Mammary epithelial cell (primary cell): ENCODE measurements at regions of chr7 and their contacts with region 1.

Region 1: DNA sequence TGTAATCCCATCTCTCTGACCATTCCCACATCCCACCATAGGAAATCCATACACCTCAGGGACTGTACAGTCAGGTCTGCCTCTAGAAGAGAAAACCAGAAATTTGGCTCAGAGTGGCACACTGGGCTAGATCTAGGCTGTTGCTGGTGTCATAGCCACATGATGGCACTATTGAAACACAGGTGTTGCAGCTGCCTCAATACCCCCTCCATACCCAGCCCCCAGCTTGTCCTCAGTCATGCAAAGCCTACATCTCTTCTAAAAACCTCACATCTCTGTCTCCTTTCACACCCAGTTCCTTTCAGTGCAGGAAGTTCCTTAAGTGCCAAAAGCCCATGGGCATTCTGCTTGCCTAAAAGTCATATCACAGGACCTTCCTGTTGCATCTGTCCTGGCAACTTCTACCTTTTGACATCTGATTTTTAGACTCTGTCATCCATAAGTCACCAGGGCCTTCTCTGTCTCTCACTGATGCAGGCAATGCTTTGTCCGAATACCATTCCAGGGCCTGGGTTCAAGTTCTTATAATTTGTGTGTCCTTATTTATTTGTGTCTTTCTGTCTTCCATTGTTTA is 27.0 kb upstream of the HIBADH start:
- DNase-seq: peak; percentile 32
- H3K4me3 ChIP-seq: no peak overlapping the region
- H3K27ac ChIP-seq: no peak overlapping the region
- H3K4me1 ChIP-seq: peaks cover 6% of the 10 kb centered on the region
- H3K27me3 ChIP-seq: no peaks in the 10 kb centered on the region
- CTCF ChIP-seq: peak; percentile 40 to 60

Region 2: GRCh38 chr7:26307226-26307625 is 1382.5 kb before region 1 on chr7:
- CTCF ChIA-PET with region 1: no interaction called
- dilution Hi-C with region 1: no loop called
- in situ Hi-C with region 1: no loop called
- intact Hi-C with region 1: no loop called
- DNase-seq: peak; percentile 17
- H3K4me3 ChIP-seq: no peak overlapping the region
- H3K27ac ChIP-seq: no peak overlapping the region
- H3K4me1 ChIP-seq: peaks cover 3% of the 10 kb centered on the region
- H3K27me3 ChIP-seq: no peaks in the 10 kb centered on the region
- CTCF ChIP-seq: no peak

Region 3: DNA sequence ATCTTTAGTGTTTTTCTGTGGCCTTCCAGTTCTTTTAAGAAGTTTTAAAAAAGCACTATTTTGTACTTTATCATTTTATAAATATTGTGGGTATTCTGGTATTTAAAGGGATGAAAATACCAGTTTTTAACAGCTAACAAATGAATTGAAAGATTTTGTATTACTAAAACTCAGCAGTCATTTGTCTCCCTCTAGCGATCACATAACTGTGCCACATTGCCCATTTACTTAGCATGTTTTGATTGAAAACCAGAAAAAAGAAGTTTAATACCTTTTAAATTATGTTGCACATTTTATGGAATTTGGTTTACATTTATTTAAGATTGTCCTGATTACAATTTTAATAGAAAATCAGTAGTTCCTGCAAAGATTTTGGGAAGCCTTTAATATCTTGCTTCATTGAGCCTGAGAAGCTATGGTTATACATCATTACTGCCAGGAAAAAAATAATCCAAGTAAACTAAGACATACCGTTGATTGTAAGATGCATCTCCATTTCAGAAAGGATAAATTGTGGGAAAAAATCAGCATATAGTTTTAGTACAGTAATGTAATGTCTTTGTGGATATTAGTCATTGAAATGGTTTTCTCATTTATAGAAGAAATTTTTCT is 85.1 kb after region 1 on chr7:
- CTCF ChIA-PET with region 1: no interaction called
- dilution Hi-C with region 1: no loop called
- in situ Hi-C with region 1: no loop called
- intact Hi-C with region 1: loop called (anchors 1 kb)
- DNase-seq: peak; percentile 8
- H3K4me3 ChIP-seq: no peak overlapping the region
- H3K27ac ChIP-seq: no peak overlapping the region
- H3K4me1 ChIP-seq: peaks cover 9% of the 10 kb centered on the region
- H3K27me3 ChIP-seq: no peaks in the 10 kb centered on the region
- CTCF ChIP-seq: peak; percentile 53 to 58